ENCODE measurements at regions of chr20 and their contacts with region 1.

Region 1: GRCh38 chr20:3000852-3001523 is 42.4 kb upstream of the GNRH2 start:
- DNase-seq: no peak

Region 2: GRCh38 chr20:2742934-2743559 is 257.9 kb before region 1 on chr20:
- intact Hi-C with region 1: loop called (anchors 10 kb)
- DNase-seq: peak in 4 of 10 donors; percentile 34 to 88 (median 50)

Region 3: GRCh38 chr20:2873010-2873746 is 127.8 kb before region 1 on chr20 and contains the start of gene PTPRA:
- intact Hi-C with region 1: loop called (anchors 10 kb)
- DNase-seq: peak; percentile 93 to 99 (median 96)

Region 4: GRCh38 chr20:2914160-2914559 is 86.8 kb before region 1 on chr20:
- intact Hi-C with region 1: loop called (anchors 2 kb)
- DNase-seq: no peak

Region 5: DNA sequence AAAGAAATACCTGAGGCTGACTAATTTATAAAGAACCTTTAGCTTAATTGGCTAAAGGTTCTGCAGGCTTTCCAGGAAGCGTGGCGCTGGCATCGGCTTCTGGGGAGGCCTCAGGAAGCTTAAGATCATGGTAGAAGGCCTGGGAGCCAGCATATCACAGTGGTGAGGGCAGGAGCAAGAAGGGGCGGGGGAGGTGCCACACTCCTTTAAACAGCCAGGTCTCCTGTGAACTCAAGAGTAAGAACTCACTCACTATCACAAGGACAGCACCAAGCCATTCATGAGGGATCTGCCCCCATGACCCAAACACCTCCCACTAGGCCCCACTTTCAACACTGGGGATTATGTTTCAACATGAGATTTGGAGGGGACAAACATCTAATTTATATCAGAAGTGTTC is 272.4 kb after region 1 on chr20:
- intact Hi-C with region 1: no loop called
- DNase-seq: peak in 1 of 10 donors; percentile 22